PC-3 (cell line): ENCODE measurements at regions of chr2 and their contacts with region 1.

Region 1: DNA sequence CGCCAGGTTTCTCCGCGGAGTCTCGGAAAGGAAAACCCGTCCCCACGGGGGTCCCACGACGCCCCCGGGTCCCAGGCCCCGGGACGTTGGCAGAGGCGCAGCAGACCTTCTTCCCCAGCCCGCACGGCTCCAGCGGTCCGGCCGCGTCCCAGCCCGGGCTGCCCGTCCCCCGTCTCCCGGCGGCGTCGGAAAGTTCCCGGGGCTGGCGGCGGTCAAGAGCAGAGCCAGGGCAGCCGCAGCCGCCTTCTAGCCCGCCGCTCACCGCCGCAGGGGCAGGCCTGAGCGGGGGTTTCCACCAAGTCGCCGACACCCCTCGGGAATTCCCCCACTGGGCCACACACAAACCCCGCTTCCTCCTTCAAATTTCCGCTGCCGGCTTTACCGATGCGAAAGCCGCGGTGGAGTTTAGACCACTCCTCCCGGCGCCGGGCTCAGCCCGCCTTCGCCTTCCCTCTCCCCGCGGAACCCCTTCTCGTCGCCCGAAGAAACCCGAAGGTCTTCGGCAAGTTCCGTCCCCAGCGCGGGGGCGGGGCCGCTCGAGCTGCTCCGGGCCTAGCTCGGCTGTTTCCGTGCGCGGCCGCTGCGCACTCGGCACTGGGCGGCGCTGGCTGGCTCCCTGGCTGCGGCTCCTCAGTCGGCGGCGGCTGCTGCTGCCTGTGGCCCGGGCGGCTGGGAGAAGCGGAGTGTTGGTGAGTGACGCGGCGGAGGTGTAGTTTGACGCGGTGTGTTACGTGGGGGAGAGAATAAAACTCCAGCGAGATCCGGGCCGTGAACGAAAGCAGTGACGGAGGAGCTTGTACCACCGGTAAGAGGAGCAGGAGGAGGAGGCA is at the start of gene CREB1:
- DNase-seq: peak; percentile 99
- ATAC-seq: peak; percentile 89
- H3K4me3 ChIP-seq: peak within 1 kb of the TSS; percentile 83
- H3K27ac ChIP-seq: peak within 1 kb of the TSS; percentile 89
- H3K4me1 ChIP-seq: peaks cover 25% of the 10 kb centered on the region
- H3K27me3 ChIP-seq: no peaks in the 10 kb centered on the region
- CTCF ChIP-seq: no peak
- total RNA-seq, gene CREB1: 34.8 and 43.5 TPM in 2 replicates

Region 2: DNA sequence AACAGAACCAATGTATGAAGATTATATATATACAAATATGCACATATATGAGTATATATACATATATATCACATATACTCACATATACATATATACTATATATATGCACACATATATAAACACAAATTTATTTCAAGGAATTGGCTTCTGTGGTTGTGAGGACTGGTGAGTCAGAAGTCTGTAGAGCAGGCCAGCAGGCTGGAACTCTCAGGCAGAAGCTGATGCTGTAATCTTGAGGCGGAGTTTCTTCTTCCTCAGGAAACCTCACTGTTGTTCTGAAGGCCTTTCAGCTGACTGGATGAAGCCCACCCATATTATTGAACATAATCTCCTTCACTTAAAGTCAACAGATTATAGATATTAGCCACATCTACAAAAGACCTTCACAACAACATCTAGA is 143.6 kb before region 1 on chr2:
- CTCF ChIA-PET with region 1: no interaction called
- POLR2A ChIA-PET with region 1: no interaction called
- intact Hi-C with region 1: no loop called
- DNase-seq: peak; percentile 27
- ATAC-seq: peak; percentile 40; the same call in 1 of the 2 replicates
- H3K4me3 ChIP-seq: no peak overlapping the region
- H3K27ac ChIP-seq: no peak overlapping the region
- H3K4me1 ChIP-seq: no peaks in the 10 kb centered on the region; the same call in 1 of the 2 replicates
- H3K27me3 ChIP-seq: no peaks in the 10 kb centered on the region
- CTCF ChIP-seq: no peak

Region 3: DNA sequence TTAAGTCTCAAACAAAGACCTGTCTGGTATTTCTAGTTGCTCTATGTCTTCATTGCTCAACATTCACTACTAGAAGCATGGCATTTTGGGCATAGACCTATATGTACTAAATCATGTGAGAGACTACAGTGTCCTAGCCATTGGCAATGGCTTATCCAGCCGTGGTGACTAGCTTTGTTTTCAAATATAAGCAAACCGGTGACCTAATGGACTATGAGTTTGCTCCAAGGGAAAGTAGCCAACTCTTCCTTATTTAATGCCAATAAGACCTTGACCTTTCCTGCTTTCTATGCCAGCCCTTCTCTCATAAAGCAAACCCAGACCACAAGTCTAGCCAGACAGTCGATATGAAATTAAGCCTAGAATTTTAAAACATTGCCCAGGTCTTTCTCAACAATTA is 113.4 kb before region 1 on chr2:
- CTCF ChIA-PET with region 1: no interaction called
- POLR2A ChIA-PET with region 1: interaction called, 15 read pairs
- intact Hi-C with region 1: no loop called
- DNase-seq: peak; percentile 65
- ATAC-seq: peak; percentile 89
- H3K4me3 ChIP-seq: no peak overlapping the region
- H3K27ac ChIP-seq: no peak overlapping the region
- H3K4me1 ChIP-seq: peaks cover 6% of the 10 kb centered on the region; the same call in 1 of the 2 replicates
- H3K27me3 ChIP-seq: no peaks in the 10 kb centered on the region
- CTCF ChIP-seq: no peak

Region 4: GRCh38 chr2:207504513-207505171 is 24.9 kb before region 1 on chr2:
- CTCF ChIA-PET with region 1: no interaction called
- POLR2A ChIA-PET with region 1: interaction called, 10 read pairs
- intact Hi-C with region 1: loop called (anchors 1 kb)
- DNase-seq: no peak
- ATAC-seq: no peak
- H3K4me3 ChIP-seq: no peak overlapping the region
- H3K27ac ChIP-seq: peak overlapping the region; percentile 90
- H3K4me1 ChIP-seq: peaks cover 34% of the 10 kb centered on the region
- H3K27me3 ChIP-seq: no peaks in the 10 kb centered on the region
- CTCF ChIP-seq: no peak

Region 5: GRCh38 chr2:207558106-207558505 is 28.6 kb after region 1 on chr2:
- CTCF ChIA-PET with region 1: no interaction called
- POLR2A ChIA-PET with region 1: interaction called, 11 read pairs
- intact Hi-C with region 1: no loop called
- DNase-seq: no peak
- ATAC-seq: peak; percentile 46
- H3K4me3 ChIP-seq: no peak overlapping the region
- H3K27ac ChIP-seq: no peak overlapping the region
- H3K4me1 ChIP-seq: peaks cover 11% of the 10 kb centered on the region
- H3K27me3 ChIP-seq: no peaks in the 10 kb centered on the region
- CTCF ChIP-seq: no peak

Region 6: GRCh38 chr2:207584952-207585351 is 55.4 kb after region 1 on chr2:
- CTCF ChIA-PET with region 1: no interaction called
- POLR2A ChIA-PET with region 1: no interaction called
- intact Hi-C with region 1: loop called (anchors 2 kb)
- DNase-seq: no peak
- ATAC-seq: no peak
- H3K4me3 ChIP-seq: no peak overlapping the region
- H3K27ac ChIP-seq: no peak overlapping the region
- H3K4me1 ChIP-seq: 0 out of 2 replicates have a peak, but pooled peaks cover under 1% of the 10 kb centered on the region
- H3K27me3 ChIP-seq: no peaks in the 10 kb centered on the region
- CTCF ChIP-seq: no peak

Region 7: DNA sequence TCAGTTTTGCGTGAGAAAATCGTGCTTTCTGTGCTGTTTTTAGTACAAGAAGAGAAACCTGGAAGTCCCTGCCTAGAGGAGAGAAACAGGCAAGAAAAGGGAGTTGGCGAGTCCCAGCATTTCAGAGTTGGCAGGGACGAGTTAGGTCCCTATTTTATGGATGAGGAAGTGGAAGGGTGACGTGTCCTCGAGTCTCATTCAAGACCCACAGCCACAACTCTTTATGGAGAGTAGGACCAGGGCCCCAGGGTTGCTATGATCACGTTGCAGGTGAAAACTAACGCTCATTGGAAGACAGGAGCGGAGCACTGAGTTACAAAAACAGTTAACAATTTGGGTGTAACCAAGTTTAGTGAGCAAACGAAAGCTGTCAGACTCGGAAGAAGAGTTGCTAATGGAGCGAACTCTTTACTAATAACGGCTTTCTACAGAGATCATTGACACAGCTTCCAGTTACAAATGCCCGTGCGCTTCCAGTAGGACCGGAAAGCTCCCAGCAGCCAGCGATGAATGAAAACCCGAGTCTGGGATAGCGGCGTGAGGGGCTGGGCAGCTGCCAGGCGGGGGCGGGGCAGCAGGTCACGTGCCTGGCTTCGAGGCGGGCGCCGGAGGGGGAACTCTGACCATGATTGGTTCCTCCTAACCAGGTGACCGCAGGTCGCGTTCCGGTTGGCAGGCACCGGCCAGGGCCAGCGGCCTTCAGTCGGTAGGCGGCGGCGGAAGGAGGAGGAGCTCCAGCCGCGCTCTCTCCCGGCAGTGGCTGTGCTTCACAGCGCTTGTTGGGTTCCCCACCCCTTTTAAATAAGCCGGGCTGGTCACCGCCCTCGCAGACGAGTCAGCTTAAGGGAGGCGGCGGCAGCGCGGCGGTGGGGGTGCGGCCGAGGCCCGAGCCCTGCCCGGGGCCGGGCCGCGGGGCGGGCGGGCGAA is 181.5 kb after region 1 on chr2 and contains the start of gene CCNYL1:
- CTCF ChIA-PET with region 1: no interaction called
- POLR2A ChIA-PET with region 1: interaction called, 6 read pairs
- intact Hi-C with region 1: loop called (anchors 5 kb)
- DNase-seq: peak; percentile 99
- ATAC-seq: peak; percentile 94
- H3K4me3 ChIP-seq: peak within 1 kb of the TSS; percentile 79
- H3K27ac ChIP-seq: peak within 1 kb of the TSS; percentile 91
- H3K4me1 ChIP-seq: peaks cover 36% of the 10 kb centered on the region
- H3K27me3 ChIP-seq: no peaks in the 10 kb centered on the region
- CTCF ChIP-seq: no peak
- total RNA-seq, gene CCNYL1: 14.7 and 19.2 TPM in 2 replicates